AG04450 (cell line): ENCODE measurements at regions of chr12 and their contacts with region 1.

Region 1: DNA sequence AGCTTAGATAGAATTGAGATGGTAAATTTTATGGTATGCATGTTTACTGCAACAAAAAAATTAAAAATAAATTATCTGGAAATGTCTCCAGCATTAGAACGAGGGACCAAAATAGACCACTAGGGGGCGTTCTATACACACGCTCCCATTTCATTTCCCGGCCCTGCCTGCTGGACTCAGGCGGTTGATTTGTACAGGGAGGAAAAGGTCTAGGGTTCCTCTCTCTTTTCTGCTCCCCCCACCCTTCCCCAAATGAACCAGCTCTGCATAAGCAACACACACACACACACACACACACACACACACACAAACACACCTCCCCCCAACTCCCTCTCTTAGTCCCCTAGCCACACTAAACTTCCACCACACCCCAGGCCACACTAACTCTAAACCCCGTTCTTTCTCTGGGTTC is 7.8 kb upstream of the DTX1 start:
- DNase-seq: peak; percentile 27
- H3K4me3 ChIP-seq: no peak overlapping the region
- H3K27ac ChIP-seq: no peak overlapping the region
- H3K27me3 ChIP-seq: peaks cover 8% of the 10 kb centered on the region
- CTCF ChIP-seq: peak; percentile 82

Region 2: DNA sequence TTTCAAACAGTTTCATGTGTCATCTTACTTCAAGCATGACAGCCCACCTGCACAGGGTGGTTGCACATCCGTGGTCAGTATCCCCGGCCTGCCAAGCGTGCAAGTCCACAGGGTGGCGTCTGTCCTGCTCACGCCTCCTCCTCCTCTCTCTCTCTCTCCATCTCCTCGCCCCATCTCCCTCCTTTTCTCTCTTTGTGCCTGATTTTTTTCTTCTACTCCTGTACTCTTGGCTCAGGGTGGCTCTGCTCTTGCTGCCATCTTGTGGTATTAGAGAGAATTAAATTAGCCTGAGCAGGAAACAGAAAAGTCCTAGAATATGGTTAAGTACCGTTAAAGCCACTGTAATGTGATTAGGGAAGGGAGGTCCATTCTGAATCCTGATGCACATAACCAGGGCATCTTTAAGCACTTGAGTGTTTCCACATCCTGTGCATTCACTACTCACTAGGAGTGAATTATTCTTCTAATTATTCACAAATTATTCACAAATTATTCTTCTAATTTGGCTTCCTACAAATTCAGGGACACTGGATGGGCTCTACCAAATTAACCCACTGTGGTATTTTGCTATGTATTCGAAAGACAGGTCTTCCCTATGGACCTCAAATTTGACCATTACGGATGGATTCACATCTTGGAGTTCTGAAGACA is 17.7 kb before region 1 on chr12:
- CTCF ChIA-PET with region 1: interaction called, 11 read pairs
- POLR2A ChIA-PET with region 1: no interaction called
- DNase-seq: no peak
- H3K4me3 ChIP-seq: no peak overlapping the region
- H3K27ac ChIP-seq: no peak overlapping the region
- H3K27me3 ChIP-seq: peaks cover 5% of the 10 kb centered on the region
- CTCF ChIP-seq: peak; percentile 76

Region 3: DNA sequence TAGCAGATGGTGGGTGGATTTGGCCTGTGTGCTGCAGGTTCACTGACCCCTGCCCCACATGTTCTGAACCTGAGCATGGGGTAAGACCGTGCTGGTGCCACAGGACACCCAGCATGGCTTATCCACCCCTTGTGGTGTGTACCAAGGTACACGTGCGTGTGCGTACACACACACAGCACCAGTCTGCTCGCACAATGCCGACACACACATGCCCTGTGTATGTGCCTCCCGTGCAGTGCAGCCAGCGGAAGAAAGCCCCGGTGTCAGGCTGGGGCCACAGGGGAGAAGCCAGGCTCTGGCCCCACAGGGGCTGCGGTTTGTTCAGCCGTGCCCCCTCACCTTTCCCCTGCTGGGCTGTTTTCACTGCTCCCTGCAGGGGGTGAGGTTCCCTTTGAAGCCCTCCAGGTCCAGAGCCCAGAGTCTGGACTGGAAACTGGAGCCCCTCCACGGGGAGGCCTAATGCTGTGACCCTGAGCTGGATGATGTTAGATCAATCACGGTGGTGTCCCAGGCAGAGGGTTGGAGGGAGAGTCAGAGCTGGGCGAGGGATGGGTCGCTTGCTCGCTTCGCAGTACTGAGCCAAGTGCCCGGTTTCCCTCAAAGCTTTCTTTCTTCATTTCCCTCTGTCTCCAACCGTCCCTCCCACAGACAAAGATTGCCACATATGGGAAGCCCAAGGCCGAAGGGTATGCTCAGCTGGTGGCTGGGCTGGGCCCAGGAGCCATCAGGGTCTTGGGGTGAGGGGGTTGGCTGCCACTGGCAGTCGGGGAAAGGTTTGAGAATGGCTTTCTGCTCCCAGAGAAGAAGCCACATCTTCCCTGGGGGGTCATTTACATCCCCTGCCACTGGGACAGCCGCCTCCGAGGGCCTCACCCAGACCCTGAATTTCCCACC is 14.0 kb after region 1 on chr12:
- CTCF ChIA-PET with region 1: interaction called, 11 read pairs
- POLR2A ChIA-PET with region 1: no interaction called
- DNase-seq: no peak
- H3K4me3 ChIP-seq: no peak overlapping the region
- H3K27ac ChIP-seq: no peak overlapping the region
- H3K27me3 ChIP-seq: peaks cover 19% of the 10 kb centered on the region
- CTCF ChIP-seq: no peak

Region 4: GRCh38 chr12:113152835-113153814 is 104.4 kb after region 1 on chr12:
- CTCF ChIA-PET with region 1: interaction called, 45 read pairs
- POLR2A ChIA-PET with region 1: no interaction called
- DNase-seq: no peak
- H3K4me3 ChIP-seq: peak overlapping the region; percentile 44
- H3K27ac ChIP-seq: no peak overlapping the region
- H3K27me3 ChIP-seq: peaks cover 48% of the 10 kb centered on the region
- CTCF ChIP-seq: peak; percentile 38

Region 5: DNA sequence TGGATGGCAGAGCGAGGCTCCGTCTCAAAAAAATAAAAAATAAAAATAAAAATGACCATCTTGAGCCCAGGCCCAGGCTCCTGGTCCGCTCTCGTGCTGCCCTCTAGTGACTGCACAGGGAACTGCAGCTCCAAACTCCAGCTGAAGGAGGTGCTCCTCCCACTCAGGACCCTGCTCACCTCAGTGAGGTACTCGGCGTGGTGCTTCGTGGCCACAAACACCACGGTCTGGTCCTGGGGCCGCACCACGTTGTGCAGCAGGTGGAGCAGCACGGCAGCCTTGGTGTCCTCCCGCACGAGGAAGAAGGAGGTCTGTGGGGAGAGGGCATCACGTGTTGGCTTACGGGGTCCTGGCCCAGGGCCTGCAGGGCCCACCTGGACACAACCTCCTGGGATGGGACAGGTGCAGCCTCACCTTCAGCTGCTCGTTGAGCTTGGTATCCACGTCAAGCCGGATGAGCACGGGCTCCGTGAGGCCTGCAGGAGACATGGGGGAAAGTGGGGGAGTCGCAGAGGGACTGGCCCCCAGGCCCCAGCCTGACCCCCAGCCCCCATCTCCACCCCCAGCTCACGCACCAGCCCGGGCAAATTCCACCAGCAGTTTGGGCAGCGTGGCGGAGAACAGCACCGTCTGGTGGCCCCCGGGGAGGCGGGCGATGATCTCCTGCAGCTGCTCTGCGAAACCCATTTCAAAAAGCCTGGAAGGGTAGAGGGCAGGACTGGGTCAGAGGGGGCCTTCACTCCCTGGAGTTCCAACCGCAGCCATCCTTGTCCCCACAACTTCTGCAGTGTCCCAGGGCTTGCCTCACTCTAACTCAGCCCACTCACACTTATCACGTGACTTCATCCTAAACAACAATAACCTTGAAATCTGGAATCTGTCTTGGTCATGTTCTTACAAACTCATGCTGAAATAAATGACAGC is 126.0 kb after region 1 on chr12:
- CTCF ChIA-PET with region 1: interaction called, 132 read pairs
- POLR2A ChIA-PET with region 1: no interaction called
- DNase-seq: no peak
- H3K4me3 ChIP-seq: no peak overlapping the region
- H3K27ac ChIP-seq: no peak overlapping the region
- H3K27me3 ChIP-seq: no peaks in the 10 kb centered on the region
- CTCF ChIP-seq: peak; percentile 99

Region 6: GRCh38 chr12:113601656-113602263 is 553.0 kb after region 1 on chr12:
- CTCF ChIA-PET with region 1: no interaction called
- POLR2A ChIA-PET with region 1: no interaction called
- DNase-seq: no peak
- H3K4me3 ChIP-seq: no peak overlapping the region
- H3K27ac ChIP-seq: no peak overlapping the region
- H3K27me3 ChIP-seq: no peaks in the 10 kb centered on the region
- CTCF ChIP-seq: no peak